ENCODE measurements at regions of chr7 and their contacts with region 1.

Region 1: DNA sequence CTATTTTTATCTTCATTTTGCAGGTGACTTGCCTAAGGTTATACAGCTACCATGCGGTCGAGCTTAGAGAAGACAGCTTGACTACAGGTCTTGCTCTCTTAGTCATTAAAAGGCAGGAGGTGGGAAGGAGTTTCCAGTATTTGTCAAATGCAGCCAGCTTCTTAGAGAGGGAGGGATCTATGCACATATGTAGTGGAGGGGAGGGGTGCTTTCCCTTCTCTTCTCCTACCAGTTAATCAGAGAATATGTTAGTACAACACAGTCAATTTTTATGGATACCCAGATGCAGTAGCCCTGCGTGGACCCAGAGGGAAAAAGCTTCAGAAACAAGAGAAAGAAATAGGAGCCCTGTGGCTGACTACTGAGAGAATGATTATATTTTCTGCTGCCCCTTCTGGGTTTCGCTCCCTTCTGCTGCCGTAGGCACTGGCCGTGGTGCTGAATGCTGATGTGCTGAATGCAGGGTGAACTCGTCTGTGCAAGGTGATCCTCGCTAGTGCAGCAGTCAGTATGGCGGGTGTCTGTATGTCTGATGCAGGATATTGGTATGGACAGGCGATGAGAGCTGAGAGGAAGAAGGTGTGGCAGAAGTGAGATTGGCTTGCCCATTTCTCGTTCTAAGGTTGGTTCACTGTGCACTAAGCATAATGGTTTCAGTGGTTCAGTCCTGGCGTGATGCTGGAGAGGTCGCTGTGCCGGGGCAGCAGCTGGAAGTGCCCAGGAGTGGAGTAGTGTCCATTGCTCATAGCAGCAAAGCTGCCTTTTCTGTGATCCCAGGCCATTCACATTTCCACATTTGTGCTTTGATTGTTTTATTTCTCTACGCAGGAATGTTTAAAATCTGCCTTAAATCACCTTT is 189.2 kb upstream of the PODXL start:
- DNase-seq: peak in 1 of 2 experiments; percentile 86
- H3K4me3 ChIP-seq: no peak overlapping the region
- H3K27ac ChIP-seq: no peak overlapping the region
- H3K4me1 ChIP-seq: peaks cover 0 to 7% (median 0%) of the 10 kb centered on the region in 4 experiments; a peak in 1 of 7 replicates
- H3K27me3 ChIP-seq: no peaks in the 10 kb centered on the region
- CTCF ChIP-seq: no peak
- EP300 ChIP-seq: no peak
- POLR2A ChIP-seq: no peak
- RAD21 ChIP-seq: 0 out of 4 replicates have a peak, but pooled peaks of 1 of the 2 experiments have one; percentile 2

Region 2: GRCh38 chr7:131723926-131724325 is 21.7 kb before region 1 on chr7:
- CTCF ChIA-PET with region 1: interaction called, 22 read pairs
- POLR2A ChIA-PET with region 1: no interaction called
- DNase-seq: peak in 1 of 2 experiments; percentile 40
- H3K4me3 ChIP-seq: no peak overlapping the region
- H3K27ac ChIP-seq: no peak overlapping the region; the same call in 1 of the 2 replicates
- H3K4me1 ChIP-seq: peaks cover 0 to 2% (median 0%) of the 10 kb centered on the region in 4 experiments; a peak in 1 of 7 replicates
- H3K27me3 ChIP-seq: no peaks in the 10 kb centered on the region
- CTCF ChIP-seq: no peak
- EP300 ChIP-seq: no peak
- POLR2A ChIP-seq: no peak
- RAD21 ChIP-seq: no peak

Region 3: GRCh38 chr7:131765575-131765974 is 20.0 kb after region 1 on chr7:
- CTCF ChIA-PET with region 1: interaction called, 10 read pairs
- POLR2A ChIA-PET with region 1: no interaction called
- DNase-seq: no peak
- H3K4me3 ChIP-seq: no peak overlapping the region
- H3K27ac ChIP-seq: no peak overlapping the region
- H3K4me1 ChIP-seq: peaks cover 0 to 5% (median 0%) of the 10 kb centered on the region in 4 experiments; a peak in 1 of 7 replicates
- H3K27me3 ChIP-seq: no peaks in the 10 kb centered on the region
- CTCF ChIP-seq: no peak
- EP300 ChIP-seq: no peak
- POLR2A ChIP-seq: no peak
- RAD21 ChIP-seq: no peak